Mucosa of descending colon (tissue), 3 donors: ENCODE measurements at regions of chr5 and their contacts with region 1.

Region 1: GRCh38 chr5:135551593-135552447 is 16.1 kb upstream of the NEUROG1 start:
- DNase-seq: peak in 2 of 3 donors; percentile 52 to 84
- ATAC-seq: peak; percentile 74
- H3K4me3 ChIP-seq: no peak overlapping the region
- H3K4me1 ChIP-seq: no peaks in the 10 kb centered on the region
- CTCF ChIP-seq: peak; percentile 63

Region 2: GRCh38 chr5:135466178-135467050 is 85.4 kb before region 1 on chr5:
- intact Hi-C with region 1: loop called (anchors 2 kb)
- DNase-seq: peak; percentile 66 to 82 (median 80)
- ATAC-seq: peak; percentile 86
- H3K4me3 ChIP-seq: no peak overlapping the region
- H3K4me1 ChIP-seq: no peaks in the 10 kb centered on the region
- CTCF ChIP-seq: peak; percentile 72

Region 3: GRCh38 chr5:135471726-135472125 is 80.1 kb before region 1 on chr5:
- intact Hi-C with region 1: loop called (anchors 2 kb)
- DNase-seq: no peak
- ATAC-seq: no peak
- H3K4me3 ChIP-seq: no peak overlapping the region
- H3K4me1 ChIP-seq: no peaks in the 10 kb centered on the region
- CTCF ChIP-seq: no peak